Activated naive CD8-positive, alpha-beta T cell treated with anti-CD3 and anti-CD28 coated beads, Interleukin-2, amount 10 ng/mL, durations not matched to agents 7 days and 5 days (primary cell): ENCODE measurements at regions of chr17 and their contacts with region 1.

Region 1: GRCh38 chr17:41665566-41666236 is 23.0 kb upstream of the EIF1 start:
- DNase-seq: peak; percentile 99
- ATAC-seq: peak; percentile 90
- H3K4me3 Mint-ChIP-seq: peak overlapping the region; percentile 88
- H3K27ac Mint-ChIP-seq: peak overlapping the region; percentile 96
- H3K4me1 Mint-ChIP-seq: peaks cover 28% of the 10 kb centered on the region
- H3K27me3 Mint-ChIP-seq: peaks cover 13% of the 10 kb centered on the region

Region 2: GRCh38 chr17:41548844-41549595 is 116.7 kb before region 1 on chr17:
- POLR2A ChIA-PET with region 1: interaction called, 11 read pairs
- DNase-seq: peak; percentile 89
- ATAC-seq: peak; percentile 91
- H3K4me3 Mint-ChIP-seq: peak overlapping the region; percentile 70
- H3K27ac Mint-ChIP-seq: peak overlapping the region; percentile 81
- H3K4me1 Mint-ChIP-seq: peaks cover 14% of the 10 kb centered on the region
- H3K27me3 Mint-ChIP-seq: peaks cover 6% of the 10 kb centered on the region

Region 3: DNA sequence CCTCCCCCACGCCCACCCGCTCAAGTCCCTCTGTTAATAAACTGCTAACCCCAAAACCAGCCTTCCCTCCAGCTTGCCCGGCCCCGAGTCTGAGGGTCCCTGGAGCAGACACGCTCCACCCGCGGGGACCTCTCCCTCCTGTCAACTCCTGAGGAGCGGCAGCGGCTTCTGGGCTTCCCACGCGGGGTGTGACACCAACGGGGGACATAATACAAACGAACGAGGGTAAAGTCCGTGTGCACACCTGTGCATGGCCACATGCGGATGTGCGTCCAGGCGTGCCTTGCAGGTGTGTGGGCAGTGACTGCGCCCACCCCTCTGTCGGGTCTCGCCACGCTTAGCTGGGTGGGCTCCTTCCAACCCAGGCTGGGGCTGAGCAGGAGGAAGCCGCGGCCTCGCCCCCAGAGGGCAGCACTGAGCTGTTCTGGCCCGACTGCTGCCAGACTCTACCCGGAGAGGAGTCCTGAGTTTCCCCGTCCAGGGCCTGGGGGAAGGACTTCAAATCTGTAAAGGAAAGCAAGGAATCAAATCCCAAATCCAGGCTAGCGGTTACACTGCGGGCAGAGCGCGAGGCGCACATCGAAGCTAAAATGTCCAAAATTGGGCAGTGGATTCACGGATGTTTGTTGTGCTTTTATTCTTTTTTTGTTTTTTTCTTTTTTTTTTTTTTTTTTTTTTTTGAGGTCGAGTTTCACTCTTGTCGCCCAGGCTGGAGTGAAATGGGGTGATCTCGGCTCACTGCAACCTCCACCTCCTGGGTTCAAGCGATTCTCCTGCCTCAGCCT is 17.1 kb before region 1 on chr17:
- POLR2A ChIA-PET with region 1: interaction called, 16 read pairs
- DNase-seq: peak; percentile 93
- ATAC-seq: peak; percentile 81
- H3K4me3 Mint-ChIP-seq: peak overlapping the region; percentile 79
- H3K27ac Mint-ChIP-seq: peak overlapping the region; percentile 72
- H3K4me1 Mint-ChIP-seq: peaks cover 8% of the 10 kb centered on the region
- H3K27me3 Mint-ChIP-seq: peaks cover 2% of the 10 kb centered on the region

Region 4: DNA sequence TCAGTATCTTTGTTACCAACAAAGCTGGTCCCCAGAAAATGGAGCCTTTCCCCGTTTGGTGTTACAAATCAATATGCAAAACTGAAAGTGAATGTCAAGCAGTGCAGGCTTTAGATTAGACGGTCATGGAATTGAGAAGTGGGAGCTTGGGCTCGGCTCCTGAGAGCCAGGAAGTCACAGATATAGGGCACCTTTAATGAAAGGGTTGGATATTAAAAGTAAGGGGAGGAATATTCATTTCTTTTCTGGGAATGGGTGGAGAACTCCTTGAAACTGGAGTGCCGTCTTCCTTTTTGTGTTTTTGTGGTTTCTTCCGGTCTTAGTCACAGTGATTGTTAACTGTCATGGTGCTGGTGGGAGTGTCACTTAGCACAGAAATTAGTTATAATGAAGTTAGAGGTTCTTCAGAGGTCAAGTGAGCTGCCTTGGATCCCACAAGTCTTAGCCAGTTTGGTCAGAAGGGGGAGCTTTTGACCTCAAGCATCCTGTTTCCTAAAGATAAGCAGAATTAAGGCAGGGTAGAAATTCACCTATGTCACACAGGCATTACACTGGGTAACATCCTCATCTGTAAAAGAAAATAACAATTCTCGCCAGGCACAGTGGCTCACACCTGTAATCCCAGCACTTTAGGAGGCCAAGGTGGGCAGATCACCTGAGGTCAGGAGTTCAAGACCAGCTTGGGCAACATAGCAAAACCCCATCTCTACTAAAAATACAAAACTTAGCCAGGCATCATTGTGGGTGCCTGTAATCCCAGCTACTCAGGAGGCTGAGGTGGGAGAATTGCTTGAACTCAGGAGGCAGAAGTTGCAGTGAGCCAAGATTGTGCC is 13.4 kb after region 1 on chr17:
- POLR2A ChIA-PET with region 1: interaction called, 66 read pairs
- DNase-seq: no peak
- ATAC-seq: peak; percentile 91
- H3K4me3 Mint-ChIP-seq: peak overlapping the region; percentile 91
- H3K27ac Mint-ChIP-seq: peak overlapping the region; percentile 92
- H3K4me1 Mint-ChIP-seq: peaks cover 46% of the 10 kb centered on the region
- H3K27me3 Mint-ChIP-seq: no peaks in the 10 kb centered on the region